ENCODE measurements at regions of chr21 and their contacts with region 1.

Region 1: DNA sequence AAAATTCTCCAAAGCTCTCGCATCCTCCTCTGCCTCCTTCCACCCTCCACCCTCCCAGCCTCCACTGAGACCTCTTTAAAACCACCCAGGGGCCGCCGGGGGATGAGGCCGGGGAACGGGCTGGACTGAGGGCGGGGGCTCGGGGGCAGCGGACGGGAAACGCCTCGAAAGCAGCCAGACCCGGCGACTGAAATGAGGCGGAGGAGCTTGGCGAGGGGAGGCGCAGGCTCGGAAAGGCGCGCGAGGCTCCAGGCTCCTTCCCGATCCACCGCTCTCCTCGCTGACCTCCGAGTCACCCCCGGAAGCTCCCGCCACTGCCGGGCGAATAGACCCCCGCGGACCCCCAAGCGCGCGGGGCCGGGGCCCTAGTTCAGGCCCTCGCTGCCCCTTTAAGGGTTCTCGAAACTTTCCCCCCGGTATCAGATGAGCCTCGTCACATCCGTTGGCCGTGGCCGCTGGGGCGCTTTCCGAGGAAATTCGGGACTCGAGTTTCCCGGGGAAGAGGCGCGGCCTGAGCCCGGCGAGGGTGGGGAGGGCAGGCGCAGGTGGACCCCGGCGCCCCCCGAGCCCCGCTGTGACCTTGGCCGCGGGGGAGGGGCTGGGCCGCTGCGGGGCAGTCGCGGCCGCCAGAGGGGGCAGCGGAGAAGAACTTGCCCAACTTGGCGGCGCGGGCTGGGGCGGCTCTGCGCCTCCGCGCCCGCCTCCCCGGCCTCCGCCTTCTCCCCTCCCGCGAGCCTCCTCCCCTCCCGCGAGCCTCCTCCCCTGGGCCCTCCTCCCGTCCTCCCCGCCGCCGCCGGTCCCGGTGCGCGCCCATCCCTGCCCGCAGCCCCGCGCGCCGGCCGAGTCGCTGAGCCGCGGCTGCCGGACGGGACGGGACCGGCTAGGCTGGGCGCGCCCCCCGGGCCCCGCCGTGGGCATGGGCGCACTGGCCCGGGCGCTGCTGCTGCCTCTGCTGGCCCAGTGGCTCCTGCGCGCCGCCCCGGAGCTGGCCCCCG is at the start of gene BACE2:
- DNase-seq: peak; percentile 39 to 76
- H3K4me3 ChIP-seq: peak within 1 kb of the TSS; percentile 73
- H3K27ac ChIP-seq: peak within 1 kb of the TSS; percentile 65
- H3K4me1 ChIP-seq: peaks cover 20% of the 10 kb centered on the region
- H3K27me3 ChIP-seq: no peaks in the 10 kb centered on the region
- CTCF ChIP-seq: peak; percentile 66; the same call in 1 of the 2 replicates
- total RNA-seq, gene BACE2: 40.8 and 43.8 TPM in 2 replicates

Region 2: GRCh38 chr21:41121785-41122421 is 45.7 kb before region 1 on chr21:
- CTCF ChIA-PET with region 1: no interaction called
- POLR2A ChIA-PET with region 1: no interaction called
- intact Hi-C with region 1: loop called (anchors 5 kb)
- DNase-seq: peak; percentile 56 to 76
- H3K4me3 ChIP-seq: no peak overlapping the region
- H3K27ac ChIP-seq: no peak overlapping the region
- H3K4me1 ChIP-seq: no peaks in the 10 kb centered on the region
- H3K27me3 ChIP-seq: peaks cover 3% of the 10 kb centered on the region
- CTCF ChIP-seq: peak; percentile 84

Region 3: GRCh38 chr21:41180766-41181481 is 13.3 kb after region 1 on chr21:
- CTCF ChIA-PET with region 1: no interaction called
- POLR2A ChIA-PET with region 1: interaction called, 11 read pairs
- intact Hi-C with region 1: no loop called
- DNase-seq: no peak
- H3K4me3 ChIP-seq: no peak overlapping the region
- H3K27ac ChIP-seq: no peak overlapping the region
- H3K4me1 ChIP-seq: no peaks in the 10 kb centered on the region
- H3K27me3 ChIP-seq: no peaks in the 10 kb centered on the region
- CTCF ChIP-seq: no peak

Region 4: DNA sequence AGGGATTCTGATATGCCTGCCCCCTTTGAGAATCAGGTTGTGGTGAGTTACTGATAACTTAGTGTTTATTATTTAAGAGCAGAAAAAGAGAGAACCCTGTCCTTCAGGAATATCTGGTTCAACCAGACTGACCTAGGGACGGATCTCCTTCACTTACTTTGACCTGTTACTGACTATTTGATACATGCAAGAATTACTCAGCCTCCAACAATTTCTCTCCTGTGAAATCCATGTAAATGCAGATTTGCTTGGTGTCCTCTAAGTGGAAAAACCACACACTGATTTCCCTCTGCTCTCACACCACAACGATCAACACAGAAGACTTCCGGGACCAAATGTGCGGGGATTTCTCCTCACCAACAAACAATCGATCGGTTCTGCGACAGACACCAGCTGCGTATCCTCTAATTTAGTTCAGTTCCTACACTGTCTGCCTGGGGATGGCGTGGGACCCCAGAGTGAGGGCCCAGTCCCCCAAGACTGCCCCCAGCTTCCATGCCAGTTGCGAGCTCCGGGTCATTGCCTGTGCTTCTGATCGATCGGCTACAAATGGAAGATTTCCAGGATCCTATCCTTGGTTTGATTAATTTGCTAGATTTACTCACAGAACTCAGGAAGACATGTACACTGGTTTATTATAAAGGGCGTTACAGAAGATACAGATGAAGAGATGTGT is 52.0 kb after region 1 on chr21:
- CTCF ChIA-PET with region 1: no interaction called
- POLR2A ChIA-PET with region 1: no interaction called
- intact Hi-C with region 1: loop called (anchors 1 kb)
- DNase-seq: peak; percentile 42 to 96
- H3K4me3 ChIP-seq: peak overlapping the region; percentile 50
- H3K27ac ChIP-seq: peak overlapping the region; percentile 93
- H3K4me1 ChIP-seq: peaks cover 37% of the 10 kb centered on the region
- H3K27me3 ChIP-seq: no peaks in the 10 kb centered on the region
- CTCF ChIP-seq: no peak

Region 5: DNA sequence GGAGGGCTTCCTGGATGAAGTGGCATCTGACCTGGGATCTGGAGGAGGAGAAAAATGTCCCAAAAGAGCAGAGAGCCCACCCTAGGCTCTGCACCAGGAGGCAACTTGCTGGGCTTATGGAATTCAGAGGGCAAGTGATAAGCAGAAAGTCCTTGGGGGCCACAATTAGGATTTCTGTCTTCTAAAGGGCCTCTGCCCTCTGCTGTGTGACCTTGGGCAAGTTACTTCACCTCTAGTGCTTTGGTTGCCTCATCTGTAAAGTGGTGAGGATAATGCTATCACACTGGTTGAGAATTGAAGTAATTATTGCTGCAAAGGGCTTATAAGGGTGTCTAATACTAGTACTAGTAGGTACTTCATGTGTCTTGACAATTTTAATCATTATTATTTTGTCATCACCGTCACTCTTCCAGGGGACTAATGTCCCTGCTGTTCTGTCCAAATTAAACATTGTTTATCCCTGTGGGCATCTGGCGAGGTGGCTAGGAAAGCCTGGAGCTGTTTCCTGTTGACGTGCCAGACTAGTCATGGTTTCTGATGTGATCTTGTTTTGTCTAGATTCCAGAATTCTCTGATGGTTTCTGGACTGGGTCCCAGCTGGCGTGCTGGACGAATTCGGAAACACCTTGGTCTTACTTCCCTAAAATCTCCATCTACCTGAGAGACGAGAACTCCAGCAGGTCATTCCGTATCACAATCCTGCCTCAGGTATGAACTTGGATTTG is 82.7 kb after region 1 on chr21:
- CTCF ChIA-PET with region 1: no interaction called
- POLR2A ChIA-PET with region 1: no interaction called
- intact Hi-C with region 1: loop called (anchors 10 kb)
- DNase-seq: no peak
- H3K4me3 ChIP-seq: no peak overlapping the region
- H3K27ac ChIP-seq: no peak overlapping the region
- H3K4me1 ChIP-seq: no peaks in the 10 kb centered on the region
- H3K27me3 ChIP-seq: no peaks in the 10 kb centered on the region
- CTCF ChIP-seq: no peak

Region 6: GRCh38 chr21:41277846-41278245 is 110.2 kb after region 1 on chr21:
- CTCF ChIA-PET with region 1: no interaction called
- POLR2A ChIA-PET with region 1: interaction called, 5 read pairs
- intact Hi-C with region 1: loop called (anchors 2 kb)
- DNase-seq: no peak
- H3K4me3 ChIP-seq: no peak overlapping the region
- H3K27ac ChIP-seq: no peak overlapping the region
- H3K4me1 ChIP-seq: no peaks in the 10 kb centered on the region
- H3K27me3 ChIP-seq: no peaks in the 10 kb centered on the region
- CTCF ChIP-seq: no peak

Region 7: DNA sequence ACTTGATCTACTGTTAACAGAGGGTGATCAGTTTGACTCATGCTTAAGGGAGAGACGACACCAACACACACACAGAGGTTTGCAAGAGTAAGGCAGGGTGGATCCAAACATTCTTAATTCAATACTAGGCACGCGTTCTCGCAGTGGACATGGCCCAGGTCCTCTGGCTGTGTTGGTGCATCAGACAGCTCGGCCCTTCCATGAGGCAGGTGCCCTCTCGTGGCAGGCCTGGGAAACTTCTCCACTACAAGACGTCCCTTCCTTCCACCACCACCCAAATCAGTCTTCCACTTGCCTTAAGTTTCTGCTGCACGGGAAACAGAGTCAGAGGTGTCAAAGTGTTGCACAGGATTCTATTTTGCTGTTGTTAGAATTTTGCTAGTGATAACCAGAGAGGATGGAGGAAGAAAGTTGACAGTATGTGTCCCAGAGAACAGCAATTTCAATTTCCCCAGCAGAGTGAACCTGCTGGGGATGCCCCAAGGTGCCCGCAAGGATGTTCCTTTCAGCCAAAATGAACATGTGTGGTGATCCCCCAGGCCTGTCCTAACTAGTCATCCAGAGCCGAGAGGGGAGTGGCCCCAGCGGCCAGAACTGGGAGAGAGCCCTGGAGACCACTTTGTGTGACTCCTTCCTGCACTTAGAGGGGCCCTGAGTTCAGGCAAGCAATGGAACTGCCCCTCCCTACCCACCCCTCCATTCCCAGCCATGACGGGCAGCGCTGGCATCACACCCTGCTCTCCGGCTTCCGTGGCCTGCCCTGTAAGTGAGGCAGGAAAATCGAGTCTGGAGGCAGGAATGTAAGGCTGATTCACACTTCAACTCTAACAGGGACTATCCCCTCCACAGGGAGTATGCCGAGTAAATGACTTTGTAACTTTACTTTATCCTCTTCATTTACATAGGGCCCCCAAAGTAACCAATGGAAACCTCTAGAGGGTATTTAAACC is 293.2 kb after region 1 on chr21:
- CTCF ChIA-PET with region 1: no interaction called
- POLR2A ChIA-PET with region 1: no interaction called
- intact Hi-C with region 1: loop called (anchors 5 kb)
- DNase-seq: peak in 1 of 2 experiments; percentile 56
- H3K4me3 ChIP-seq: no peak overlapping the region
- H3K27ac ChIP-seq: no peak overlapping the region
- H3K4me1 ChIP-seq: no peaks in the 10 kb centered on the region
- H3K27me3 ChIP-seq: no peaks in the 10 kb centered on the region
- CTCF ChIP-seq: peak; percentile 74

Measured in PC-9 (cell line).